ENCODE measurements at regions of chr17 and their contacts with region 1.

Region 1: DNA sequence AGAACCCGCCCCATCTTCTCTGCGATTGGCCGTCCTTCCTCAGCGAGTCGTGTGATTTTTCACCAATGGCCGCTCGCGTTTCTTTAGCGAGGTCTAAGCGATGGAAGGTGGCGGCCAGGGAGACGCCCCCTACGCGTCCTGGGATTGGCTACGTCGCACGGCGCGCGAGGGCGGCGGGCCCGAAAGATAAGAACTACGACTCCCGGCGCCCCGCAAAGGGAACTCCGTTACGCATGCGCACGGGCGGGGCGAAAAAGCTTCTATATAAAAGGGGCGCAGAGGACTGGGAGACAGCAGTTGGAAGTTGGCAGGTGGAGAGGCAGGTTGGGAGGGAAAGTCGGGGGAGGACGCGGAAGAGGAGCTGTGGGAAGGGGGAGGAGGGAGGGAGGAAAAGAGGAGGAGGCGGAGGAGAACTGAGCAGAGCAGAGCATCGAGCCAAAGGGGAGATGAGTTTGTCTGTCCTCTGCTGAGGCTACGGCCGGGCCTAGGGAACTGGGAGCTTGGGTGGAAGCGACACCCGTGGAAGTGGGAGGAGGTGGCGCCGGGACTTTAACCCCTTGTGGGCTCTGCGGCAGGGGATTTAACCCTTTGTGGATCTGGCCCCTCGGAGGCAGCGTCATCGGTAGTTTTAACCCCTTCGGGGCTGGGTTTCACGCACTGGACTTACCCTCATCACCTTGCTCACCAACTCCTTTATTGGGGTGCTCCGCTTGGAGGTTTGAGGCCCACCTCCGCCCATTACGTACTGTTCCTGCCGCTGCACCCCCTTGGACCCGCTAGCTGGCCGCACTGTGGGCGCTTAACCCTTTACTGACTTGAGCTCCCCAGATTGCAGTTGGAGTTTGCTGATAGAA is at the start of gene HEXIM1:
- DNase-seq: peak; percentile 100
- ATAC-seq: peak; percentile 74
- H3K4me3 ChIP-seq: peak within 1 kb of the TSS; percentile 69 to 99 (median 85)
- H3K4me3 Mint-ChIP-seq: peak within 1 kb of the TSS; percentile 91
- H3K27ac ChIP-seq: peak within 1 kb of the TSS; percentile 97 to 98
- H3K27ac Mint-ChIP-seq: peak within 1 kb of the TSS; percentile 99
- H3K4me1 ChIP-seq: peaks cover 38 to 66% of the 10 kb centered on the region in 2 donors
- H3K4me1 Mint-ChIP-seq: peaks cover 61% of the 10 kb centered on the region
- H3K27me3 ChIP-seq: no peaks in the 10 kb centered on the region
- H3K27me3 Mint-ChIP-seq: no peaks in the 10 kb centered on the region
- CTCF ChIP-seq: no peak
- total RNA-seq, gene HEXIM1: 48.9 and 49.6 TPM in 2 replicates

Region 2: DNA sequence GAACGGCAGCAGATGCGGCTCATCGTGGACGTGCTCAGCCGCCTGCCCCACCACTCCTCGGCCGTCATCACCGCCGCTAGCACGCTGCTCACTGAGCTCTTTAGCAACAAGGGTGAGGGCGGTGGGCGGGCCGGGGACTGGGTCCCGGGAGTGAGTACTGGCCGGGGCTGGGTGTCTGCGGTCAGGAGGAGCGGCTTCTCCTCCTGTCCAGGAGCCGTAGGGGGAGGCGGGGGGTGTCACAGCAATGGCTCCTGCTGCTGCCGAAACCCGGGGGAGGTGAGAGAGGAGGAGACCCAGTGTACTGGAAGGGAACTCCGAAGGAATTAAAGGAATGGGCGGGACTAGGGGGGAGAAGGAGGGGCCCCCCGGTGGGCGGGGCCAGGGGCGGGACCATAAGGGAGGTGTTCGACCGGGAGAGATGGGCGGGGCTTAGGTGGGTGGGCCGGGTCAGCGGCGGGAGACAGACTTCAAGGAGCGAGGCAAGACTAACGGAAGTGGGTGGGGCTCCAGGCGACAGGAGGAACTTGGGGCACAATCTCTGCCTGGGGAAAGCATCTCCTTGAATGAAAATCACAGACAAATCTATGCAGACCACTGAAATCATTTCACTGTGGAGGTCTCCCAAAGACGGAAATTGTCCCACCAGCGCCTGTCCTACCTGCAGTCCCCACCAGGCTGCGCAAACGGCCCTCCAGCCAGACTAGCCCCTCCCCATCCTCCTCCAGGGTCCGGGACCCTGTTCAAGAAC is 1141.6 kb before region 1 on chr17:
- CTCF ChIA-PET with region 1: no interaction called
- POLR2A ChIA-PET with region 1: no interaction called
- intact Hi-C with region 1: loop called (anchors 5 kb)
- DNase-seq: peak; percentile 96
- ATAC-seq: peak; percentile 91
- H3K4me3 ChIP-seq: peak overlapping the region; percentile 53 to 84 (median 77)
- H3K4me3 Mint-ChIP-seq: peak overlapping the region; percentile 95
- H3K27ac ChIP-seq: peak overlapping the region in 1 of 2 donors; percentile 33
- H3K27ac Mint-ChIP-seq: peak overlapping the region; percentile 68
- H3K4me1 ChIP-seq: peaks cover 37 to 42% of the 10 kb centered on the region in 2 donors
- H3K4me1 Mint-ChIP-seq: peaks cover 33% of the 10 kb centered on the region
- H3K27me3 ChIP-seq: peaks cover 0 to 28% (median 11%) of the 10 kb centered on the region in 4 experiments
- H3K27me3 Mint-ChIP-seq: peaks cover 13% of the 10 kb centered on the region
- CTCF ChIP-seq: peak; percentile 69

Region 3: GRCh38 chr17:45060797-45061605 is 87.4 kb before region 1 on chr17 and contains the start of gene NMT1:
- CTCF ChIA-PET with region 1: interaction called, 3 read pairs
- POLR2A ChIA-PET with region 1: no interaction called
- intact Hi-C with region 1: loop called (anchors 1 kb)
- DNase-seq: peak; percentile 100
- ATAC-seq: peak; percentile 87
- H3K4me3 ChIP-seq: peak within 1 kb of the TSS; percentile 62 to 98 (median 96)
- H3K4me3 Mint-ChIP-seq: peak within 1 kb of the TSS; percentile 99
- H3K27ac ChIP-seq: peak within 1 kb of the TSS; percentile 75 to 89
- H3K27ac Mint-ChIP-seq: peak within 1 kb of the TSS; percentile 100
- H3K4me1 ChIP-seq: peaks cover 29 to 42% of the 10 kb centered on the region in 2 donors
- H3K4me1 Mint-ChIP-seq: peaks cover 40% of the 10 kb centered on the region
- H3K27me3 ChIP-seq: no peaks in the 10 kb centered on the region
- H3K27me3 Mint-ChIP-seq: no peaks in the 10 kb centered on the region
- CTCF ChIP-seq: no peak
- total RNA-seq, gene NMT1: 123 and 134 TPM in 2 replicates

Region 4: GRCh38 chr17:45073414-45074070 is 74.9 kb before region 1 on chr17:
- CTCF ChIA-PET with region 1: no interaction called
- POLR2A ChIA-PET with region 1: no interaction called
- intact Hi-C with region 1: no loop called
- DNase-seq: no peak
- ATAC-seq: no peak
- H3K4me3 ChIP-seq: no peak overlapping the region
- H3K4me3 Mint-ChIP-seq: no peak overlapping the region
- H3K27ac ChIP-seq: no peak overlapping the region
- H3K27ac Mint-ChIP-seq: no peak overlapping the region
- H3K4me1 ChIP-seq: peaks cover 16 to 21% of the 10 kb centered on the region in 2 donors
- H3K4me1 Mint-ChIP-seq: peaks cover 24% of the 10 kb centered on the region
- H3K27me3 ChIP-seq: no peaks in the 10 kb centered on the region
- H3K27me3 Mint-ChIP-seq: no peaks in the 10 kb centered on the region
- CTCF ChIP-seq: no peak

Region 5: DNA sequence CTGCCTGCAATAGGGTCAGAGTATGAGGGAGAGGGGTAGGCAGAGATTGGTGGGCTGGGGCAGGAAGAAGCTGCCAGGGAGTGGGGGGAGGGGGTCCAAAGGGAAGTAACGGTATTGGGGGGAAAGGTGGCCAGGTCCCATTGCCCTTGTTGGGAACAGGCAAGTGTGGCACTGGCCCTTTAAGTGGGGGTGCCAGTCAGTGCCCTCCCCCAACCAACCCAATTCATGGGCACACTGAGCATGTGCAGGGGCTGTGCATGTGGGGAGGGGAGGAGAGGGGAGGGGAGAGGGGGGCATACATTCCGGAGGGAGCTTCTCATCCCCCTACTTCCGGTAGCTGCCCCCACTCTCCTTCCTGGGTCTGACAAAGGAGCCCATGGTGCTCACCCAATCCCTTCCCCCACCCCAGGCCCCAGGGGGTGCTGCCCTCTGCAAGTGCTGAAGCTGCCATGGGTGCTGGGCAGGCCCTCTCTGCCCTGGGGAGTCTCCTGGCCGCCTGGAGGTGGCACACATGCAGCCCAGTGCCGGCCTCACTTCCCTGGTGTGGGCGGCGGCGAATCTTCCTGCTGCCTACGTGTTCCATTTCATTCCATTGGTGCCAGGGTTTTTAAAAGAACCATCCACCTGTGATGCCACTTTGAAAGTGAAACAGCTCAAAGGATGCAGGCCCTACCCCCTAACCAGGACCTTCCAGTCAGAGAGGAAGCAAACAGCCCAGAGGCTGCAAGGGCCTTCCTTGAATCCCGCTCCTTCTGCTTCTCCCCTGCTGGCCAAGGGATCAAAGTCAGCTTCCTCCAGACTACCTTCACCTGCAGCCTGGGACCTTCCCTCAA is 24.3 kb after region 1 on chr17:
- CTCF ChIA-PET with region 1: interaction called, 198 read pairs
- POLR2A ChIA-PET with region 1: interaction called, 23 read pairs
- intact Hi-C with region 1: loop called (anchors 2 kb)
- DNase-seq: peak; percentile 59
- ATAC-seq: peak; percentile 85
- H3K4me3 ChIP-seq: peak overlapping the region in 4 of 5 experiments; percentile 31 to 51 (median 49)
- H3K4me3 Mint-ChIP-seq: peak overlapping the region; percentile 86
- H3K27ac ChIP-seq: peak overlapping the region; percentile 40 to 63
- H3K27ac Mint-ChIP-seq: peak overlapping the region; percentile 97
- H3K4me1 ChIP-seq: peaks cover 11 to 16% of the 10 kb centered on the region in 2 donors
- H3K4me1 Mint-ChIP-seq: peaks cover 12% of the 10 kb centered on the region
- H3K27me3 ChIP-seq: no peaks in the 10 kb centered on the region
- H3K27me3 Mint-ChIP-seq: no peaks in the 10 kb centered on the region
- CTCF ChIP-seq: no peak

Region 6: DNA sequence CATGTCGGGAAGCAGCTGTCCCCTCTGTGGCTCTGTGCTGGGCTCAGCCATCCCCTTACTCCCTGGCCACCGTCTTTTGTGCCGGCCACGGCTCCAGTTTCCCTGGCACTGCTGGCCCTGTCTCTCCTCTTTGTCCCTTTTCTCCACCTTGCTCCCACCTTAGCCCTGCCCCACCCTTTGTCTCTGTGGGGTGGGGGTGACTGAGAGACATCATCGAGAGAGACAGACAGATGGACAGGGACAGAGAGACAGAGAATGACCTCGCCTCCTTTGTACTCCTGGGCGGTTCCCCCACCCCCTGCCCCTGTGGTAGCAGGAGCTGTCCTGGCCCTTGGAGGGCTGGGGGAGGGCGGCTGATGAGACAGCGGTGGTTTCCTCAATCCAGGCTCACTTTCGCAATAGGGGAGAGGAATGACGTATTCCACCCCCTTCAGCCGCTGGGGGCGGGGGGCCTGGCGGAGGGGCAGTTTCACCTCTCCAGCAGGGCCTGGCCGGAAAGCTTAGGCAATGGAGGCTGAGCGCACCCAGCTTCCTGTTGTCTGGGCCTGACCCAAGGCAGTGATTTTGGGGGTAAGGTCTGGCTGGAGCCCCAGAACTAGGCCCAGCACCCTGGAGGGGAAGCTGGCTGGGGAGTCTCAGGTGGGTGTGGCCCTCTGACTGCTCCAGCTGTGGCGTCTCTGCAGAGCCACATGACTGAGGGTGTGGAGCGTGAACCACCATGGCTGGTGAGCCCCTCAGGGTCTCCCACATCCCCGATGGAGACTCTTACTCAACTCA is 80.5 kb after region 1 on chr17:
- CTCF ChIA-PET with region 1: interaction called, 28 read pairs
- POLR2A ChIA-PET with region 1: interaction called, 51 read pairs
- intact Hi-C with region 1: loop called (anchors 2 kb)
- DNase-seq: peak; percentile 94
- ATAC-seq: peak; percentile 52
- H3K4me3 ChIP-seq: peak overlapping the region; percentile 8 to 96 (median 90)
- H3K4me3 Mint-ChIP-seq: peak overlapping the region; percentile 100
- H3K27ac ChIP-seq: peak overlapping the region; percentile 99 to 100
- H3K27ac Mint-ChIP-seq: peak overlapping the region; percentile 99
- H3K4me1 ChIP-seq: peaks cover 70 to 90% of the 10 kb centered on the region in 2 donors
- H3K4me1 Mint-ChIP-seq: peaks cover 95% of the 10 kb centered on the region
- H3K27me3 ChIP-seq: no peaks in the 10 kb centered on the region
- H3K27me3 Mint-ChIP-seq: no peaks in the 10 kb centered on the region
- CTCF ChIP-seq: no peak

Region 7: GRCh38 chr17:45307290-45308015 is 159.0 kb after region 1 on chr17:
- CTCF ChIA-PET with region 1: interaction called, 3 read pairs
- POLR2A ChIA-PET with region 1: no interaction called
- intact Hi-C with region 1: loop called (anchors 2 kb)
- DNase-seq: peak; percentile 81
- ATAC-seq: peak; percentile 68
- H3K4me3 ChIP-seq: peak overlapping the region in 2 of 5 experiments; percentile 21 to 25
- H3K4me3 Mint-ChIP-seq: peak overlapping the region; percentile 85
- H3K27ac ChIP-seq: peak overlapping the region; percentile 81 to 90
- H3K27ac Mint-ChIP-seq: peak overlapping the region; percentile 98
- H3K4me1 ChIP-seq: peaks cover 90 to 95% of the 10 kb centered on the region in 2 donors
- H3K4me1 Mint-ChIP-seq: peaks cover 82% of the 10 kb centered on the region
- H3K27me3 ChIP-seq: no peaks in the 10 kb centered on the region
- H3K27me3 Mint-ChIP-seq: no peaks in the 10 kb centered on the region
- CTCF ChIP-seq: no peak

Measured in B cell (primary cell).